ENCODE measurements at regions of chr17 and their contacts with region 1.

Region 1: DNA sequence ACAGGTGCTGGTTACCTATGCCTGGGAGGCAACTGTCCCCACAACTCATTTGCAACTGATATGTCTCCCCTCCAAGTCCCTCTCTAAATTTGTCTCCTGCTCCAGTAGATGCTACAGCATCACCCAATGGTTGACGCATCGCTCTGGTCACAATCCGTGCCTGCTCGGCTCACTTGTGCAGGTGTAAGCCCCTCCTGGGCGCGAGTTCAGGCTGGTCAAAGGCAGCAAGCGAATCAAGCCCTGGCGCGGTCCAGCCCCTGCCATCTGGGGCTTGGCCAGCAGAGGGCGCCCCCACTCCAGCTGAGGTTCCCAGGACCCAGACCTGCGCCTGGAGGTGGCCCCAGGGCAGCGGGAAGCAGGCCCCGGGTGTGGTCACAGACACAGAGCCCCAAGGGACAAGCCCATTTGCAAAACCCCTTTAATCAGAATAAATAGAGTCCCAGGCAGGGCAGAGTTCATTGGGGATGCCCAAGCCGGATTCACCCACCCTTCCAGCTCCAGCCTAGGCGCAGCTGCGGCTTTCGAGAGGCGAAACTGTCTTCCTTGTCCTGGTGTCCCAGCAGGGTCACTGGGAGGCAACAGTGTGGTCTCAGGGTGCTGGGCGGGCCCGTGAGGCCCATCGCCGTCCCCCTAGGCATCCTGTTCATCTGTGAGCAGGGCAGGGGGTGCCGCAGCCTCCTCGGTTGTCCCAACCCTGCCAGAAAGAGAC is 15.9 kb downstream of the TMC6 start:
- H3K4me3 ChIP-seq: no peak overlapping the region
- H3K27ac ChIP-seq: no peak overlapping the region
- H3K4me1 ChIP-seq: no peaks in the 10 kb centered on the region
- CTCF ChIP-seq: peak; percentile 96

Region 2: DNA sequence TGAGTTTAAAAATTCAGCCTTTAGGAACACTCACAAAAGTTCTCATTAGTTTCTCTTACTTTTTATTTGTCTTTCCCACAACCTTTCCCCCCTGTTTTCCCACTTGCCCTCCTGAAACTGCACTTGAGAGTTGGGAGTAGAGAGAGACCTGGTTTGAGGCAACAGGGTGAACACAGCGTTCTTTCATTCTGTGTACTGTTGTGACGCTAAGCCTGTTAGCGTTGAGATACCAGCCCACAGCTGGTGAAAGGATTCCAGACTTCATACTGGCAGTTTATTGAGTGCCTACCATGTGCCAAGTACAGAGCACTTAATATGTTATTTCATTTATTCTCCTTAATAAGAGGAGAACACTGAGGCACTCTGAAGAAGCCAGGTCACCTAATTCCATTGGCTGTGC is 143.9 kb before region 1 on chr17:
- CTCF ChIA-PET with region 1: no interaction called
- POLR2A ChIA-PET with region 1: no interaction called
- H3K4me3 ChIP-seq: no peak overlapping the region
- H3K27ac ChIP-seq: no peak overlapping the region
- H3K4me1 ChIP-seq: peaks cover 17% of the 10 kb centered on the region
- CTCF ChIP-seq: no peak

Region 3: DNA sequence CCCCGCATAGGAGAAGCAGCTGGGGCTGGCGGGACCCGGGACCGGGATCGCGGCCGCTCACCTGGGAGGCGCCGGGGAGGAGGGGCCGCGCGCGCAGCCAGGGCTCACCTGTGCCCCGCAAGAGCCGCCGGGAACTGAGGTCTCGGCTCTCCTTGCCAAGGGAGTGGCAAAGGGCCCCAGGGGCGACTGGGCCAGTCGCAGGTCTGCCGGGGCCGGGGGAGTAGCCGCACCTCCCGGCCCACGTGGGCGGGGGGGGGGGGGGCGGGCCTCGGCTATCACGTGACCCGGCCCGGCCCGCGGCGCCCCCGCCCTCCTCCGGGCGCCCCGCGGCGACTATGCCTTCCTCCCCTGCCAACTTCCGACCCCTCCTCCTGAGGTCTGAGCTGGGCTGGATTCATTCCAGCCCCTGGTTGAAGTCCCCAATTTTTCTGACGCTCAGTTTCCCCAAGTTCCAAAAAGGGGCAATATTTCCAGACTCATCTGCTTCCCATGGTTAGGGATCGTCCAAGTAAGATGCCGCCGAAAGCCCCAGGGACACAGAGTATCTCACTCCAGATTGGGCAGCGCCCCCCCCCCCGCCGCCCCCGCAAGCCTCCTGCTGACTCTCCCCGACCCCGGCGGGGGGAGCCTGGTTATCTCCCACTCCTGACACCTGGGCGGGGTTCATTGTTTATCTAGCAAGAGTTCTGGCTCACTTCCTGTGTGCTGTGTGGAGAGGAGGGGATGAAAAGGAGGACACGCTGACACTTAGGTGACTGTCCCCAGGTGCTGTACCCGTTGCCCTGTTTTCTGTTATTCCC is 16.1 kb after region 1 on chr17 and contains the start of gene TMC6:
- CTCF ChIA-PET with region 1: interaction called, 13 read pairs
- POLR2A ChIA-PET with region 1: no interaction called
- H3K4me3 ChIP-seq: peak within 1 kb of the TSS; percentile 62
- H3K27ac ChIP-seq: peak within 1 kb of the TSS; percentile 37; the same call in 1 of the 2 replicates
- H3K4me1 ChIP-seq: peaks cover 6% of the 10 kb centered on the region; the same call in 1 of the 2 replicates
- CTCF ChIP-seq: no peak

Region 4: DNA sequence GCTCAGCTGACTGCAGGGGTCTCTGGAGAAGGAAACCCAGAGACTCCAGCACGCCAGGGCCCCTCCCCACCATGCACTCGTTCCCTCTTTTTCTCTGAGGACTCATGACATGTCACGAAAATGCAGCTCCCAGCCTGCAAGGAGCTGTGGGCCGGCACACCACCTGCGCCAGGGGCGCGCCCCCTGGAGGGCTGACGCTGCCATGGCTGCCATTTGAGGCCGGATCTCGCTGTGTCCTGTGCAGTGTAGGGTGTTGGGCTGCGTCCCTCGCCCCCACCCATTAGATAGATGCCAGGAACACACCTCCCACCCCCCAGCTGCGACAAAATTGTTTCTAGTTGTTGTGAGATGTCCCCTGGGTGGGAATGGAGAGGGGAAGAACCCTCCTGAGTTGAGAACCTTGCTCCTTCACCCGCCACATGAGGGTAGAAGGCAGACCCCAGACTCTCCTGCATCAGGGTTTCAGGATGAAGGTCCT is 63.9 kb after region 1 on chr17:
- CTCF ChIA-PET with region 1: interaction called, 53 read pairs
- POLR2A ChIA-PET with region 1: interaction called, 3 read pairs
- H3K4me3 ChIP-seq: no peak overlapping the region
- H3K27ac ChIP-seq: no peak overlapping the region
- H3K4me1 ChIP-seq: no peaks in the 10 kb centered on the region; the same call in 1 of the 2 replicates
- CTCF ChIP-seq: peak; percentile 90